PC-3 (cell line): ENCODE measurements at regions of chr2 and their contacts with region 1.

Region 1: DNA sequence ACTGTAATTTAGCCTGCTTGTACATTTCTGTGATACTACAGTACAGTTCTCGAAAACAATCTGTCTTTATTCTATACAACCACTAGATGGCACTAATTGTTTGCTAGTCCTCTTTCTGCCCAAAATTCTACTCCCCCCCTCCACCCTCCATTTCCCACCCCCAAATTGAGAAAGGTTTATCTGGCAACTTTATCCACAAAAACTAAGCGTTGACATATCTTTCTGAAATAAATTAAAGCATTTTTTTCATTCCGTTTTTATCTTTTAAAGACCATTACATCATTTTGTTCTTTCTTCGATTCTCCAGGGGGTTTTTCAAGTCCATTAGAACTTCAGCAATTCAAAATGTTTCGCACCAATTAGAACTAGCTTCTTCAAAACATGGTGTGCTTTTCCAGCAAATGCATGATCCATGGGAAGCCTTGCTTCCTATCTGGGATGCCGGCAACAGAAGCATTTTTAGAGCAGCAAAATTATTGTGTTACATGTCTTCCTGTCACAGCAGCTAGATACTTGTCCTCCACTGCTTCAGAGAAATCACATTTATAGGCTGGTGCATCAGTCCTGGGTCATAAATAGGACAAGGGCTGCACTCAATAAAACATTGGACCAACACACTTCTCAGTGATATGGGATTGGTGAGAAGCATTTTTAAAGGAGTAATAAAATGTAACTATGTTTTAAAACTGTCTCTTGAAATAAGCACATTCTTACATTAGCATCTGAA is 241.3 kb downstream of the PAX3 start:
- DNase-seq: peak; percentile 21
- ATAC-seq: 0 out of 2 replicates have a peak, but pooled peaks have one; percentile 24
- H3K4me3 ChIP-seq: no peak overlapping the region
- H3K27ac ChIP-seq: no peak overlapping the region
- H3K4me1 ChIP-seq: peaks cover 6% of the 10 kb centered on the region
- H3K27me3 ChIP-seq: peaks cover 58% of the 10 kb centered on the region
- CTCF ChIP-seq: peak; percentile 81

Region 2: GRCh38 chr2:222283634-222284033 is 226.1 kb after region 1 on chr2:
- CTCF ChIA-PET with region 1: no interaction called
- POLR2A ChIA-PET with region 1: no interaction called
- intact Hi-C with region 1: loop called (anchors 10 kb)
- DNase-seq: no peak
- ATAC-seq: no peak
- H3K4me3 ChIP-seq: no peak overlapping the region
- H3K27ac ChIP-seq: no peak overlapping the region
- H3K4me1 ChIP-seq: no peaks in the 10 kb centered on the region
- H3K27me3 ChIP-seq: peaks cover 79% of the 10 kb centered on the region
- CTCF ChIP-seq: no peak

Region 3: DNA sequence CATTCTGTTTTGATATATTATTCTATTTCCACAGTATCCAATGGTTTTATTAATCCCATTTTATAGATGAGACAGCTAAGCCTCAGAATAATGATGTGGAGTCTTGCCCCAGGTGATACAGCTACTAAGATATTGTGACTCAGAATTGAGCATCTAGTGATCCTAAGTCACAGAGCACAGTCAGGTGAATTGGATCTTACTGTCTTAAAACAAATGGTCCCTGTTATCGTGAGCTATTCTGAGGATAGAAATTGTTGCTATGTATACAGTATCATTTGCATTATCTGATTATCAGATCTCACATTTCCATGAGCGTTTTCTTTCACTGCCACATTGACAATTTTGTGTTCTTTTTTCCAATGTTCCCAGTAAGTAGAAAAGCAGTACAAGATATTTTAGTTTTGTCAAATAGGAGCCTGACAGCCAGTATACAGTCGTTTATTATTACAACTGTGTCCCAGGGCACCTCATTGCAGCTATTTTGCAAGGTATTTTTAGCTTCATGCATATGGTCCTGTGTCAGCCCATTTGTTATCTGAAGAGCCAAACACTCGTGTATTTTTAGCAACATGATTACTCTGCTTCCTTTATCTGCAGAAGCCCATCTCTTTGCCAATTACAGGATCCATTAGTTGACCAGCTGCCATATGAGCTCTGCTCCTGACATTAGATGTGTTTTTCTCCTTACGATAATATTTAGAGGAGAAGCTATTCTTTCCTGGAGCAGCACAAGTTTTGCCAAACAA is 341.7 kb after region 1 on chr2:
- CTCF ChIA-PET with region 1: no interaction called
- POLR2A ChIA-PET with region 1: no interaction called
- intact Hi-C with region 1: no loop called
- DNase-seq: no peak
- ATAC-seq: no peak
- H3K4me3 ChIP-seq: no peak overlapping the region
- H3K27ac ChIP-seq: no peak overlapping the region
- H3K4me1 ChIP-seq: no peaks in the 10 kb centered on the region
- H3K27me3 ChIP-seq: peaks cover 14% of the 10 kb centered on the region; the same call in 1 of the 2 replicates
- CTCF ChIP-seq: no peak

Region 4: GRCh38 chr2:222572751-222573174 is 515.3 kb after region 1 on chr2:
- CTCF ChIA-PET with region 1: no interaction called
- POLR2A ChIA-PET with region 1: no interaction called
- intact Hi-C with region 1: loop called (anchors 10 kb)
- DNase-seq: peak; percentile 49
- ATAC-seq: peak; percentile 56
- H3K4me3 ChIP-seq: peak overlapping the region; percentile 14; the same call in 1 of the 2 replicates
- H3K27ac ChIP-seq: peak overlapping the region; percentile 95
- H3K4me1 ChIP-seq: peaks cover 63% of the 10 kb centered on the region
- H3K27me3 ChIP-seq: no peaks in the 10 kb centered on the region
- CTCF ChIP-seq: no peak

Region 5: GRCh38 chr2:222613715-222614331 is 556.3 kb after region 1 on chr2:
- CTCF ChIA-PET with region 1: no interaction called
- POLR2A ChIA-PET with region 1: no interaction called
- intact Hi-C with region 1: loop called (anchors 10 kb)
- DNase-seq: peak; percentile 61
- ATAC-seq: peak; percentile 80
- H3K4me3 ChIP-seq: no peak overlapping the region
- H3K27ac ChIP-seq: no peak overlapping the region
- H3K4me1 ChIP-seq: no peaks in the 10 kb centered on the region
- H3K27me3 ChIP-seq: no peaks in the 10 kb centered on the region
- CTCF ChIP-seq: peak; percentile 85